ENCODE measurements at regions of chr7 and their contacts with region 1.

Region 1: GRCh38 chr7:137606061-137606674 is 240.6 kb downstream of the DGKI start:
- DNase-seq: peak; percentile 57
- H3K4me3 ChIP-seq: no peak overlapping the region
- CTCF ChIP-seq: no peak

Region 2: GRCh38 chr7:137169282-137169698 is 436.9 kb before region 1 on chr7:
- in situ Hi-C with region 1: loop called (anchors 25 kb)
- DNase-seq: peak; percentile 80
- H3K4me3 ChIP-seq: no peak overlapping the region
- CTCF ChIP-seq: peak; percentile 87

Region 3: DNA sequence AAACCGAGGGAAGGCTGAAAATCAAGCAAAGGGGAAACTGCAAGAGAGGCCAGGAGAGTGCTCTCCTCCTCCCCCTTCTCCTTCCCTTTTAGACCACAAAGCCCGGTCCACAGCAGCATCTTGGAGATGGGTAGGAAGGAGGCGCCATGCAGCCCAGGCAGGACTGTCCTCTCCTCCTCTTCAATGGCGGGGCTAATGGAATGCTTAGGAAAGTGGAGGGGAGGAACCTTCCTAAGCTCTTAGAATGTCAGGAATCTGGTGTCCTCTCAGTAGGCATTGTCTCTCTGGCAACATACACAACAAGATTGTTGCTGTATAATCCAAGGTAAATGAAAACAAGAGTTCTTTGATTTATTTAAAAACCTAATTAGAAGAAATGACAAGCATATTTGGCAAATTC is 55.5 kb after region 1 on chr7:
- in situ Hi-C with region 1: loop called (anchors 5 kb)
- DNase-seq: no peak
- H3K4me3 ChIP-seq: no peak overlapping the region
- CTCF ChIP-seq: no peak

Region 4: DNA sequence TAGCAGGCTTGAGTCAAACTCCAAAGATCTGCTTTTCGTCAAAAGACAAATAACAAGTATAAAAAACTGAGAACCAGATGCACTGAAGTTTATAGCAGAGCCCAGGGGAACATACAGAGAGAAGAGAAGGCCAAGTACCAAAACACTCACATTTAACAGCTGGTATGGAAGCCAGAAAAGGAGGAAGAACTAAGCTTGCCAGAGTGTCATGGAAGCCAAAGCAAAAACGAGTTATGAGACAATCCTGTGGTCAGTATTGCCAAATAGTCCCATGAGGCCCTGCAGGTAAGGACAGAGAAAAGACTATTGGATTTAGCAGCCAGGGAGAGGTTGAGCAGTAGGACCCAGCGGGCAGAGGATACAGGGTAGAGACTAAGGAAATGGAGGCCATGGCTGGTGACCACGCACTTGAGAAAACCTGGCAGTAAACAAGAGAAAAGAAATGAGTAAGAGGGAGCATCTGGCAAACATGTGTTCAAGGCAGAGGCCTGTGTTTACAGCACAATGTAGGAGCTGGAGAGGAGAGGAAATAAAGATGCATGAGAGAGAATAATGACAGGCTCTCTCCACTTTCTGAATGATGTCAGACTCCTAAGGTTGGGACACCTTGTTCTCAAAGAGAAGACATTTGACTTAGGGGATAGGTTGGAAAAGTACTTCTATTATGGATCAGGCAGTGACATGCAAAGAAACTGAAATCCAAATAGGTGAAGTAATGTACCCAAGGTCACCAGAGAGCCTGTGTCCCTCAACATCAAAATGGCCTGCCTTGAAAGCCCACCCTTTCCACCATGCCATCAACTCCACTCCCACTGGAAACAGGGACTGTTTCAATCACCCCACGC is 386.6 kb after region 1 on chr7:
- in situ Hi-C with region 1: loop called (anchors 10 kb)
- DNase-seq: peak; percentile 73
- H3K4me3 ChIP-seq: no peak overlapping the region
- CTCF ChIP-seq: no peak

Measured in astrocyte of the cerebellum (primary cell).